Naive thymus-derived CD4-positive, alpha-beta T cell (primary cell): ENCODE measurements at regions of chr5 and their contacts with region 1.

Region 1: GRCh38 chr5:142356716-142357473 is 32.1 kb upstream of the SPRY4 start:
- DNase-seq: peak; percentile 69 to 96 (median 88)
- ATAC-seq: peak; percentile 95
- H3K4me3 ChIP-seq: peak overlapping the region; percentile 62
- H3K4me3 Mint-ChIP-seq: peak overlapping the region; percentile 78 to 88 (median 86)
- H3K27ac ChIP-seq: peak overlapping the region; percentile 35
- H3K27ac Mint-ChIP-seq: peak overlapping the region; percentile 58 to 93 (median 86)
- H3K4me1 ChIP-seq: peaks cover 15 to 35% of the 10 kb centered on the region in 2 donors
- H3K4me1 Mint-ChIP-seq: peaks cover 24 to 64% (median 53%) of the 10 kb centered on the region in 7 donors
- H3K27me3 ChIP-seq: no peaks in the 10 kb centered on the region
- H3K27me3 Mint-ChIP-seq: peaks cover 0 to 12% (median 0%) of the 10 kb centered on the region in 5 donors

Region 2: GRCh38 chr5:141923448-141924352 is 433.2 kb before region 1 on chr5 and contains the start of gene DELE1:
- CTCF ChIA-PET with region 1: no interaction called
- POLR2A ChIA-PET with region 1: no interaction called
- intact Hi-C with region 1: loop called in 1 of 2 experiments (anchors 2 kb)
- DNase-seq: peak; percentile 79 to 92 (median 90)
- ATAC-seq: peak; percentile 97
- H3K4me3 ChIP-seq: peak within 1 kb of the TSS; percentile 81
- H3K4me3 Mint-ChIP-seq: peak within 1 kb of the TSS; percentile 88 to 98 (median 94)
- H3K27ac ChIP-seq: peak within 1 kb of the TSS; percentile 98
- H3K27ac Mint-ChIP-seq: peak within 1 kb of the TSS; percentile 87 to 99 (median 98)
- H3K4me1 ChIP-seq: peaks cover 10 to 14% of the 10 kb centered on the region in 2 donors
- H3K4me1 Mint-ChIP-seq: peaks cover 23 to 54% (median 36%) of the 10 kb centered on the region in 7 donors
- H3K27me3 ChIP-seq: no peaks in the 10 kb centered on the region
- H3K27me3 Mint-ChIP-seq: no peaks in the 10 kb centered on the region
- total RNA-seq, gene DELE1: 77.3 to 101 (median 88.2) TPM

Region 3: GRCh38 chr5:142024771-142025304 is 332.1 kb before region 1 on chr5:
- CTCF ChIA-PET with region 1: no interaction called
- POLR2A ChIA-PET with region 1: no interaction called
- intact Hi-C with region 1: loop called in 1 of 2 experiments (anchors 2 kb)
- DNase-seq: peak; percentile 61 to 85 (median 82)
- ATAC-seq: peak; percentile 100
- H3K4me3 ChIP-seq: peak overlapping the region; percentile 62
- H3K4me3 Mint-ChIP-seq: peak overlapping the region; percentile 81 to 97 (median 92)
- H3K27ac ChIP-seq: peak overlapping the region; percentile 79
- H3K27ac Mint-ChIP-seq: peak overlapping the region; percentile 96 to 100 (median 98)
- H3K4me1 ChIP-seq: peaks cover 4 to 11% of the 10 kb centered on the region in 2 donors
- H3K4me1 Mint-ChIP-seq: peaks cover 5 to 20% (median 18%) of the 10 kb centered on the region in 7 donors
- H3K27me3 ChIP-seq: no peaks in the 10 kb centered on the region
- H3K27me3 Mint-ChIP-seq: no peaks in the 10 kb centered on the region

Region 4: DNA sequence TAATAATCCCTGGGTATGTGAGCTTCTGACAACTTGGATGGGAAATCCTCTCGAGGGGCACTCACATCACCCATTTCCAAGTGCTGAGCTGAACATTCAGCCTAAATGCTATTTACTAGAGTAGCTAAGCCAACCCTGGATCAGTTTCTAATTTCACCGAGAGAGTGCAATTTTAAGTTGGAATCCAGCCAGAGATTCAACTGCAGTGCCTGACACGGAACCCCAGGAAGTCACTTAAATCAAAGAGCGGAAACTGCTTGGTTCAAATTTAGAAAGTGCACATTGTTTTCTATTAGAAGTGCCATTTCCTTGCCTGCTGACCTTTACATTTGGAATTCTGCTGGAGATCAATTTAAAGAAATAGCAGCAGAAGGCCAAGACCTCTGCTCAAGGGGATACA is 40.8 kb before region 1 on chr5:
- CTCF ChIA-PET with region 1: no interaction called
- POLR2A ChIA-PET with region 1: no interaction called
- intact Hi-C with region 1: loop called in 1 of 2 experiments (anchors 2 kb)
- DNase-seq: peak in 7 of 9 donors; percentile 27 to 68 (median 62)
- ATAC-seq: no peak
- H3K4me3 ChIP-seq: no peak overlapping the region
- H3K4me3 Mint-ChIP-seq: peak overlapping the region in 8 of 10 donors; percentile 5 to 63 (median 57)
- H3K27ac ChIP-seq: no peak overlapping the region
- H3K27ac Mint-ChIP-seq: peak overlapping the region in 1 of 9 donors; percentile 34
- H3K4me1 ChIP-seq: peaks cover 0 to 22% of the 10 kb centered on the region in 2 donors
- H3K4me1 Mint-ChIP-seq: peaks cover 11 to 40% (median 34%) of the 10 kb centered on the region in 7 donors
- H3K27me3 ChIP-seq: no peaks in the 10 kb centered on the region
- H3K27me3 Mint-ChIP-seq: peaks cover 5 to 27% (median 11%) of the 10 kb centered on the region in 5 donors

Region 5: DNA sequence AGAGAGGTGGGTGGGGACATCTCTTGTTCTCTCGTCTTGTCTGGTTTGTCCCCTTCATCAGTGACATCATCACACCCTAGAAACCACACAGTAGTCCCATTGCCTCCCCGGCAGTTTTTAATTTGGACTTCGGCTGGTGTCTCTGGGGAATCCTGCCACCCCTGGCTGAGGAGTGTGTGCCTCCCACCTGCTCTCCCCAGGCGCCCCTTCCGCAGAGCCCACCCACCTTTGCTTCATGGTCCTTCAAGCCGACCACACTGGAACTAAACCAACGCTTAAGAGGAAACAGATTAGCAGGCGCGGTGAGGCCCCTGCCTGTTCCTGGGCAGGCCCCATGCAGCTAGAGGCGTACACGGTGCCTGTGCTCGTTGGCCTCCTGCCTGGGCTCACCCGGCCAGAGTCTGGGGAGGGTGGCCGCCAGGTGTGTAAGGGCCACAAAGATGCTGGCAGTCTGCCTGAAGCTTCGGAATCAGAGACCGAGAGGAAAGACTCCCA is 75.5 kb after region 1 on chr5:
- CTCF ChIA-PET with region 1: no interaction called
- POLR2A ChIA-PET with region 1: interaction called, 3 read pairs
- intact Hi-C with region 1: loop called (anchors 1 to 2 kb)
- DNase-seq: peak in 5 of 9 donors; percentile 8 to 32 (median 16)
- ATAC-seq: peak; percentile 54
- H3K4me3 ChIP-seq: no peak overlapping the region
- H3K4me3 Mint-ChIP-seq: peak overlapping the region; percentile 42 to 77 (median 60)
- H3K27ac ChIP-seq: no peak overlapping the region
- H3K27ac Mint-ChIP-seq: peak overlapping the region; percentile 25 to 87 (median 74)
- H3K4me1 ChIP-seq: peaks cover 22 to 27% of the 10 kb centered on the region in 2 donors
- H3K4me1 Mint-ChIP-seq: peaks cover 27 to 41% (median 33%) of the 10 kb centered on the region in 7 donors
- H3K27me3 ChIP-seq: no peaks in the 10 kb centered on the region
- H3K27me3 Mint-ChIP-seq: no peaks in the 10 kb centered on the region

Region 6: DNA sequence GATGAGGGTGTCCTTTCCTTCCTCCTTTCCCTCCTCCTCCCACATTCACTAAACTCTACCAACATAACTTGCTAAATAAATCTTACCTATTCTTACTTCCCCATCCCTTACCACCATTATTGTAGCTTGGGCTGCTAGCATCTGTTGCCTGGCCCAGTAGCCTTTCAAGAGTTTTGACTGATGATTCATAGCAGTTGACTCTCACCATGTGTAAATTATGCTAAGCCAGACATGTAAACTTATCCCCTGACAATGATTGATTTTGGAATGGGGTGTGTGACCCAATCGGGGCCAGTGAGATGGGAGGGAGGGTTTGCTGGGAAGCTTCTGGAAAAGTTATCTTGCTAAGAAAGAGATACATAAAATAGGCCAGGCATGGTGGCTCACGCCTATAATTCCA is 129.7 kb after region 1 on chr5:
- CTCF ChIA-PET with region 1: no interaction called
- POLR2A ChIA-PET with region 1: no interaction called
- intact Hi-C with region 1: no loop called
- DNase-seq: no peak
- ATAC-seq: no peak
- H3K4me3 ChIP-seq: no peak overlapping the region
- H3K4me3 Mint-ChIP-seq: peak overlapping the region in 1 of 10 donors; percentile 9
- H3K27ac ChIP-seq: no peak overlapping the region
- H3K27ac Mint-ChIP-seq: no peak overlapping the region
- H3K4me1 ChIP-seq: no peaks in the 10 kb centered on the region
- H3K4me1 Mint-ChIP-seq: no peaks in the 10 kb centered on the region
- H3K27me3 ChIP-seq: no peaks in the 10 kb centered on the region
- H3K27me3 Mint-ChIP-seq: peaks cover 5 to 14% (median 5%) of the 10 kb centered on the region in 5 donors